OCI-LY7 (cell line): ENCODE measurements at regions of chr1 and their contacts with region 1.

Region 1: GRCh38 chr1:201618389-201618788 is 79.5 kb downstream of the NAV1 start:
- DNase-seq: no peak
- H3K4me3 ChIP-seq: no peak overlapping the region
- H3K27ac ChIP-seq: no peak overlapping the region
- H3K4me1 ChIP-seq: no peaks in the 10 kb centered on the region
- CTCF ChIP-seq: no peak

Region 2: DNA sequence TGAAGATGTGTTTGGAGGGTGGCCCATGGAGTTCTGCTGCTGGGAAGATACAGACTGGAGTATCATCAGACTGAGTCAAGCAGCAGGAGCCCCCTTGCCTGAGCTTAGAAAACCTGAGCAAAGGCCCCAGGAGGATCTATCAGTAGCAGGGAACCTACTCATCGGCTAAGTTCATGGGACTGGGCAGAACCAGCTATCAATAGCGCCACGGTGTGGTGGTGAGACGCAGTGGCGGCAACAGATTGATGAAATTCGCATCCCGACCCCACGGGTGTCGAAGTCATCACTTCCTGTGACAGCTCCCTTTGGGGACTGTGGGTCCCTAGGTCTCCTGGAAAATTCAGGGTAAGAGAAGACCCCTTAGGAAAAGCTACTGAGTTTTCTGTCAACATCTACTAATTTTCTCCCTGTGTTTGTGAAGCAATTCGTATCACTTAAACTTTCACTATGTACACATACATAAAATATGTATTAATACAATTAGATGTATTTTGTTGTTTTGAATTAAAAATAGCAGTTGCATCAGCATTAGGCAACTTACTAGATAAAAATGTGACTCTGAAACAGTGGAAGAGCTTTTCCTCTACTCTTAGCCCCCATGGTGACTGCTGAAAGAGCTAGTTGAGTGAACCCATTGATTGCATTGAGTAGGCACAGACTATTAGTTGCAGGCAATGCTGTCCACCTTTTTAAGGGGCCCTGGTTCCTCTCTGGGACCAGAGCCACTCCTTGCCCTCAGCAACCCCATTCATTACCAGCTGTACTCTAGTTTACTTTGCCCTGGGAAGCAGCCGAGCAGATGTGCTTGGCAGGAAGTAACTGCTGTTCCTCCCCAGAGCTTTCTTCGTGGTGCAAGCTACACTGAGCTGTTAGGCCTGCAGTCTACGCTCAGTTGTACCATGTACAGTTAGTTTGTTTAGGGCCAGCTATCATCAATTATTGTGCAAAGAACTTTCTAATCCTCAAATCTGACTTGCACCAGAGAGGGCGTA is 498.9 kb before region 1 on chr1:
- CTCF ChIA-PET with region 1: no interaction called
- POLR2A ChIA-PET with region 1: no interaction called
- intact Hi-C with region 1: no loop called
- DNase-seq: peak; percentile 67
- H3K4me3 ChIP-seq: no peak overlapping the region
- H3K27ac ChIP-seq: no peak overlapping the region
- H3K4me1 ChIP-seq: peaks cover 11% of the 10 kb centered on the region
- CTCF ChIP-seq: peak; percentile 92

Region 3: GRCh38 chr1:201476670-201477344 is 141.6 kb before region 1 on chr1:
- CTCF ChIA-PET with region 1: interaction called, 13 read pairs
- POLR2A ChIA-PET with region 1: no interaction called
- intact Hi-C with region 1: no loop called
- DNase-seq: no peak
- H3K4me3 ChIP-seq: no peak overlapping the region
- H3K27ac ChIP-seq: no peak overlapping the region
- H3K4me1 ChIP-seq: peaks cover 26% of the 10 kb centered on the region
- CTCF ChIP-seq: no peak